A673 (cell line): ENCODE measurements at regions of chr13 and their contacts with region 1.

Region 1: DNA sequence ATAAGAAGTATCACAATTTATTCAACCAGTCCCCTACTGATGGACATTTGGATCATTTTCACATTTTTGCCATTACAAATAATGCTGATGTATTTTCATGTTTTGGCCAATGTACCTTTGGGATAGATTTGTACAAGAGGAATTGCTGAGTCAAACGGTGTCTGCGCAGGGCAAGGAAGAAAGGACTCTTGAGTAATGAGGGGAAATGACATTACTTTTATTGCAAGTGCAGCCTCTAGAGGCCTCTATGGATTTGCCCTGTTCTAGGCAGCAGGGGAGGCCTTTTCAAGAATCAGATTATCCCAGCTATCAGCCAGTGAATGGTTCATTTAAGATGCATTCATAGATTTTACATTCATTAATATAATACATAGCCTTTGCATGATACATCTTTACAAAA is 32.9 kb upstream of the GTF3A start:
- DNase-seq: no peak
- H3K4me3 ChIP-seq: no peak overlapping the region
- H3K27ac ChIP-seq: no peak overlapping the region
- H3K4me1 ChIP-seq: no peaks in the 10 kb centered on the region
- H3K27me3 ChIP-seq: peaks cover 15% of the 10 kb centered on the region
- CTCF ChIP-seq: no peak

Region 2: GRCh38 chr13:26160586-26160985 is 1230.9 kb before region 1 on chr13:
- CTCF ChIA-PET with region 1: no interaction called
- POLR2A ChIA-PET with region 1: no interaction called
- intact Hi-C with region 1: no loop called
- DNase-seq: no peak
- H3K4me3 ChIP-seq: no peak overlapping the region
- H3K27ac ChIP-seq: no peak overlapping the region
- H3K4me1 ChIP-seq: no peaks in the 10 kb centered on the region
- H3K27me3 ChIP-seq: peaks cover 22% of the 10 kb centered on the region
- CTCF ChIP-seq: no peak

Region 3: DNA sequence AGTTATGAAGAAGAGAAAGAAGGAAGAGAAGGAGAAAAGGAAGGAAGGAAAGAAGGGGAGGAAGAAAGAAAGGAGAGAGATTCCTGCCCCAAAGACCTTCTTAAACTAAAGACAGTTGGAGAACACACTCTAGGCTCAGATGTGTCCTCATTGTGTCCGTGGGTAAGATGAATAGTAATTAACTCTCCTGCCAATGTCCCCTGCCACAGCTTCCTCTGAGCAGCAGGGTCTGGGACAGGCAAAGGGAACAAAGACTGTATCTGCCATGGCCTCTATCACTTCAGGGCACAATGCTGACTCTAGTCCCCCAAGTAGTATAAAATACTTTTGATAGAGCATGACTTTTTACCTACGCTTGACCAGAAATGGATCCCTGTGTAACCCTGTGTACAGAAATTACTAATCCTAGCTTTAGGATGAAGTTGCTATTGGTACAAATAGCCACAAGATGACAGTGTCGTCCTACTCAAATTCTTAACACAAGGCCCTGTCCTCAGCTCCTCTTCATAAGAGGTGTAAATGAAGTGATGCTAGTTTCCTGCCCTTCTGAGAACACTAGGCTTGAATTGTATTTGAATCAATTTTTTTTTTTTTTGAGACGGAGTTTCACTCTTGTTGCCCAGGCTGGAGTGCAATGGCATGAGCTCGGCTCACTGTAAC is 444.7 kb before region 1 on chr13:
- CTCF ChIA-PET with region 1: no interaction called
- POLR2A ChIA-PET with region 1: no interaction called
- intact Hi-C with region 1: no loop called
- DNase-seq: peak; percentile 48
- H3K4me3 ChIP-seq: no peak overlapping the region
- H3K27ac ChIP-seq: no peak overlapping the region
- H3K4me1 ChIP-seq: no peaks in the 10 kb centered on the region
- H3K27me3 ChIP-seq: no peaks in the 10 kb centered on the region
- CTCF ChIP-seq: peak; percentile 62

Region 4: DNA sequence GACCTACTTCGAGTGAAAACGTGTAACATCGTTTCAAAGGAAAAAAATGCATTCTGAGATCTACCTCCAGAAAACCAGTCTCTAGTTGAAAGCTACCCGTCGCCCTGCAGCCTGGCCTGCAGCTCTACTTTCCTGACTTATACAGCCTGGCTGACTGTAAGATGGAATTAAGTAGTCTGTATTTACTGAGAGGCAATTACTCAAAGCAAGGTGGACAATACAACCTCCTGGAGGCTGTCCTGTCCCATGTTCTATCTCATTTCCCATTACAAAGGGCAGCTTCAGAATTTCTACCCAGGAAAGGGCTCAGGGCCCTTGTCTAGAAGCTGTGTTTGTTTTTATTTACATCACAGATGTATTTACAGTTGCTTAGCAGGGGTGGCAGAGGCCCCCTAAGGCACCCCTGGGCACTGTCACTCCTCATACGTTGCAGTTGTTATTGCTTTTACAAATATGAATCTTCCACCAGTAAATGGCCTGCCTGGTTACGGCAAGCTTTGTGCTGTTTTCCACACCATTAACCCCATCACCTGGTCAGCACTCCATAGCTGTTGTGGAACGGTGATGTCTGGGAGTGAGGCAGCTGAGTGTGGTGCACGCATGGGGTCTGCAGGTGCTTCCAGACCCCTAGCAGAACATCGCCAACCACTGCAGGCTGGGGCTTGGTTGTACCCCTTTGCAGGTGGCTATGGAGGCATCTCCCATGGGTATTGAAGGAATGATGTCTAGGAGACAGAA is 105.2 kb after region 1 on chr13:
- CTCF ChIA-PET with region 1: no interaction called
- POLR2A ChIA-PET with region 1: interaction called, 13 read pairs
- intact Hi-C with region 1: no loop called
- DNase-seq: no peak
- H3K4me3 ChIP-seq: no peak overlapping the region
- H3K27ac ChIP-seq: no peak overlapping the region
- H3K4me1 ChIP-seq: no peaks in the 10 kb centered on the region
- H3K27me3 ChIP-seq: no peaks in the 10 kb centered on the region
- CTCF ChIP-seq: no peak